CD8-positive, alpha-beta T cell (primary cell): ENCODE measurements at regions of chr21 and their contacts with region 1.

Region 1: DNA sequence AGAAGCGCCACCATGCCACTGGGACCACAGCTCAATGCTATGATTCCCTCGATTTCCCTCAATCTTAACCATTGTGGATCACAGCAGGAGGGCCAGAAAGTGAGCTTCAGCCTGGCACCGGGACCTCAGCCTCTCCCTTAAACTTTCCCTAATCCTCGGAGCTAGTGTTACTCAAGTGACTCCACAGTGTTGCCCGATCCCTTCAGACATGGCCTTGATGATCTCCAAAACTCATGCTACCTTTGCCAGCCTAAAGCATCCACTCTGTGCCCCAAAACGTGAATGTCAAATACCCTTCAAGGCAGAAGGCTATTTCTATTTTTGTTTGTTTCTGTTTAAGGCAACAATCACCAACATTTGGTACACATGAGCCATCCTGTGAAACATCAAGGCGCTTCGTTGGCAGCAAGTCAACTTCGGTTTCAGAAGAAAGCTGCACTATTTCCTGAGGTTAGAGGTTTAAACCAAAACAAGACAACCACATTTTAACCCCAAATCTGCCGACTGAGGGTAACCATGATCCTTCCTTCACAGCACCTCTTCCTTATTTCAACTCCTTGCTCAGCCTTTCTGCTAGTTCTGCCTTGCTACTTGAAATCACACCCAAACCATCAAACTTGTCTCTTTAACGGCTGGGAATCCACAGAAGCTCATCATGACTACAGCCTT is 94.4 kb upstream of the KRTAP19-8 start:
- DNase-seq: peak; percentile 47 to 92 (median 77)
- ATAC-seq: peak; percentile 91
- H3K4me3 ChIP-seq: peak overlapping the region; percentile 10 to 42
- H3K4me3 Mint-ChIP-seq: peak overlapping the region; percentile 80
- H3K27ac ChIP-seq: no peak overlapping the region
- H3K27ac Mint-ChIP-seq: peak overlapping the region; percentile 58
- H3K4me1 ChIP-seq: peaks cover 35% of the 10 kb centered on the region
- H3K4me1 Mint-ChIP-seq: peaks cover 47% of the 10 kb centered on the region
- H3K27me3 ChIP-seq: peaks cover 0 to 4% of the 10 kb centered on the region in 2 experiments
- H3K27me3 Mint-ChIP-seq: peaks cover 3% of the 10 kb centered on the region
- CTCF ChIP-seq: no peak

Region 2: DNA sequence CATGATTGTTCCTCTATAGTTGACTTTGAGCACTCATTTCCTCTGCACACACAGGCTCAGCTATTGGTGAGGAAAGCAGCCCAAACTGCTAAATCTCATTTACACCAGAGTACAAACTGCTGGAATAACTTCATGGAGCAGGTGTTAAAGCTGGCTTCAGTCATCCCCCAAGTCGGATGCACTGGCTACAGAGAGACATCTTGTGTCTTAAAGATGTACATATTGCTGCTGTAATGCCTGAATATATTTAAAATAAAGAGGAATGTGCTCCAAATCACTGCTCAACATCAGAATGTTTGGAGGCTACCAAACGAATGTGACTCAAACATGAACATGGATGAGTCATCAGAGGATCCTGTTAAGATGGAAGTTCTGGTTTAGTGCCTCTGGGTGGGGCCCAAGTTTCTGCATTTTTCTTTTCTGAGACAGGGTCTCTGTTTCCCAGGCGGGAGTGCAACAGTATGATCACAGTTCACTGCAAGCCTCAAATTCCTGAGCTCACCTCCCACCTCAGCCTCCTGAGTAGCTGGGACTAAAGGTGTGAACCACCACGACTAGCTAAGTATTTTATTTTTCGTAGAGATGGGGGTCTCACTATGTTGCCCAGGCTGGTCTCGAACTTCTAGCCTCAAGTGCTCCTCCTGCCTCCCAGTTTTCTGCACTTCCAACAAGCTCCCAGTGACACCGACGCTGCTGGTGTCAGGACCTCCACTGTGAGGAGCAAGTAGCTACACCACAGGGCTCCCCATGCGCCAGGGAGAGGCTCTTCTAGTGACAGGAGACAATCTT is 15.4 kb before region 1 on chr21:
- CTCF ChIA-PET with region 1: interaction called, 3 read pairs
- POLR2A ChIA-PET with region 1: interaction called, 5 read pairs
- intact Hi-C with region 1: loop called in 1 of 2 experiments (anchors 2 kb)
- DNase-seq: peak in 1 of 9 experiments; percentile 16
- ATAC-seq: no peak
- H3K4me3 ChIP-seq: no peak overlapping the region
- H3K4me3 Mint-ChIP-seq: no peak overlapping the region
- H3K27ac ChIP-seq: no peak overlapping the region
- H3K27ac Mint-ChIP-seq: no peak overlapping the region
- H3K4me1 ChIP-seq: no peaks in the 10 kb centered on the region
- H3K4me1 Mint-ChIP-seq: peaks cover 1% of the 10 kb centered on the region
- H3K27me3 ChIP-seq: no peaks in the 10 kb centered on the region
- H3K27me3 Mint-ChIP-seq: peaks cover 3% of the 10 kb centered on the region
- CTCF ChIP-seq: no peak

Region 3: DNA sequence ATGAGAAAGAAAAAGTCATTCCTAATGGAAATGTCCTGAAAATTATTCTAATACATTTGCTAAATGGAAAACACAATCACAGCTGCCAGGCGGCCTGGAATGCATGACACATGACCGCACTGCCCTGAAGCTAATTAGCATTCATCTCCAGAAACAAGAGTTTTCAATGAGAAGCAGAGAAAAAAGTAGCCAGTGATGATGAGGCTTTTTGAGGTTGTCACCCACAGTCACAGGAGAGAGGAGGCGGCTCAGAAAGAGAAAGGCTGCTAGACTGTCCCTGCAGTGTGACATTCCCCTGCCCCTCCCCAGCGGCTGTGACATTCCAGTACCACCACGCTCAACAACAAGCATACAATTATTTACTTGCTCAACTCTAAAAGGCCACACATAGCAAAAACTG is 28.4 kb after region 1 on chr21:
- CTCF ChIA-PET with region 1: interaction called, 3 read pairs
- POLR2A ChIA-PET with region 1: interaction called, 30 read pairs
- intact Hi-C with region 1: loop called in 1 of 2 experiments (anchors 2 kb)
- DNase-seq: no peak
- ATAC-seq: no peak
- H3K4me3 ChIP-seq: no peak overlapping the region
- H3K4me3 Mint-ChIP-seq: peak overlapping the region; percentile 26
- H3K27ac ChIP-seq: no peak overlapping the region
- H3K27ac Mint-ChIP-seq: peak overlapping the region; percentile 93
- H3K4me1 ChIP-seq: peaks cover 76% of the 10 kb centered on the region
- H3K4me1 Mint-ChIP-seq: peaks cover 80% of the 10 kb centered on the region
- H3K27me3 ChIP-seq: no peaks in the 10 kb centered on the region
- H3K27me3 Mint-ChIP-seq: no peaks in the 10 kb centered on the region
- CTCF ChIP-seq: no peak

Region 4: DNA sequence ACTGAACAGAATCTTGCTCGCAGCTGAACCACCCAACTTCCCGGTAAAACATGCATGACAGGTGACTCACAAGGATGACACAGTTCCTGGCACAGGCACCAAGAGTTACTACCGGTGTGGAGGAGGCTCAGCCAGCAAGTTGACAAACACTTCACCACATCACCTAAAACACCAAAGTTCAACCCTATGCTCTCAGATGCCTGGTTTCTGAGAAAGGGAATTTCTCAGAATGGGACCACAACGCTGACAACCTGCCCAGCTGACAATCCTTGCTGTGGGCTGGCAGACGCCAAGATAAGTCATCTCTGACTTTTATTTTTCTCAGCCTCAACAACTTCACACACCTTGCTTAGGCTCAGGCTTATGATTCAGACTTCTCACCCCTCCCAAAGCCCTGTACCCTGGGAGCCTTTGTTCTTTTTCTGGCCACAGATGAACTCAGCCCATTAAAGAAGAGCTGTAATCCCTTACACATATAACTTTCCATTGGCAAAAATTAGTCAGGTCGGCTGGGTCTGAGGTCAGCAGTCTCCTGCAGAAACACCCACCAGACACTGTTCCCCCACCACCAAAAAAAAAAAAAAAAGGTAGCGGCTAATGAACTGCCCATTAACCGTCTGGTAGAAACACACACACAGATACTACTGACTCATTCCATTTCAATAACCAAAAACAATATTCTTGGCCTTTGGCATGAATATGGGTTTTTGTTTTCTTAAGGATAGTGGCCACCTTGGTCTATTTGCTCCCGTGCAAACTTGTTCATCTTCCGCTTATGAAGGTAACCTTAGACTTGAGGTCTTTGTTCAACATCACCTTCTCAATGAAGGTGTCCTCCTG is 222.1 kb after region 1 on chr21:
- CTCF ChIA-PET with region 1: no interaction called
- POLR2A ChIA-PET with region 1: no interaction called
- intact Hi-C with region 1: loop called in 1 of 2 experiments (anchors 5 kb)
- DNase-seq: peak; percentile 23 to 90 (median 69)
- ATAC-seq: peak; percentile 87
- H3K4me3 ChIP-seq: no peak overlapping the region
- H3K4me3 Mint-ChIP-seq: peak overlapping the region; percentile 27
- H3K27ac ChIP-seq: peak overlapping the region in 1 of 2 experiments; percentile 25
- H3K27ac Mint-ChIP-seq: peak overlapping the region; percentile 76
- H3K4me1 ChIP-seq: peaks cover 21% of the 10 kb centered on the region
- H3K4me1 Mint-ChIP-seq: peaks cover 30% of the 10 kb centered on the region
- H3K27me3 ChIP-seq: no peaks in the 10 kb centered on the region
- H3K27me3 Mint-ChIP-seq: no peaks in the 10 kb centered on the region
- CTCF ChIP-seq: no peak